Activated T-helper 1 cell treated with anti-CD3 and anti-CD28 coated beads, Interleukin-12 subunit alpha, Interleukin-12 subunit beta, Interleukin-2, Interleukin-4 antibody, amounts not matched to agents 30 ng/mL and 10 ng/mL and 1 ng/mL, durations not matched to agents 14 hours and 24 hours and 36 hours (primary cell): ENCODE measurements at regions of chr2 and their contacts with region 1.

Region 1: GRCh38 chr2:74458132-74458925 is at the start of gene WBP1:
- DNase-seq: peak; percentile 99
- H3K4me3 Mint-ChIP-seq: peak within 1 kb of the TSS; percentile 98
- H3K27ac Mint-ChIP-seq: peak within 1 kb of the TSS; percentile 98
- H3K4me1 Mint-ChIP-seq: peaks cover 61% of the 10 kb centered on the region
- H3K27me3 Mint-ChIP-seq: no peaks in the 10 kb centered on the region
- total RNA-seq, gene WBP1: 32.6 and 35.3 TPM in 2 replicates

Region 2: GRCh38 chr2:73293534-73294171 is 1164.7 kb before region 1 on chr2 and contains the start of gene EGR4:
- intact Hi-C with region 1: loop called (anchors 1 kb)
- DNase-seq: peak; percentile 91
- H3K4me3 Mint-ChIP-seq: peak within 1 kb of the TSS; percentile 75
- H3K27ac Mint-ChIP-seq: peak within 1 kb of the TSS; percentile 63
- H3K4me1 Mint-ChIP-seq: peaks cover 14% of the 10 kb centered on the region
- H3K27me3 Mint-ChIP-seq: peaks cover 72% of the 10 kb centered on the region
- total RNA-seq, gene EGR4: 1.9 TPM in 2 replicates

Region 3: DNA sequence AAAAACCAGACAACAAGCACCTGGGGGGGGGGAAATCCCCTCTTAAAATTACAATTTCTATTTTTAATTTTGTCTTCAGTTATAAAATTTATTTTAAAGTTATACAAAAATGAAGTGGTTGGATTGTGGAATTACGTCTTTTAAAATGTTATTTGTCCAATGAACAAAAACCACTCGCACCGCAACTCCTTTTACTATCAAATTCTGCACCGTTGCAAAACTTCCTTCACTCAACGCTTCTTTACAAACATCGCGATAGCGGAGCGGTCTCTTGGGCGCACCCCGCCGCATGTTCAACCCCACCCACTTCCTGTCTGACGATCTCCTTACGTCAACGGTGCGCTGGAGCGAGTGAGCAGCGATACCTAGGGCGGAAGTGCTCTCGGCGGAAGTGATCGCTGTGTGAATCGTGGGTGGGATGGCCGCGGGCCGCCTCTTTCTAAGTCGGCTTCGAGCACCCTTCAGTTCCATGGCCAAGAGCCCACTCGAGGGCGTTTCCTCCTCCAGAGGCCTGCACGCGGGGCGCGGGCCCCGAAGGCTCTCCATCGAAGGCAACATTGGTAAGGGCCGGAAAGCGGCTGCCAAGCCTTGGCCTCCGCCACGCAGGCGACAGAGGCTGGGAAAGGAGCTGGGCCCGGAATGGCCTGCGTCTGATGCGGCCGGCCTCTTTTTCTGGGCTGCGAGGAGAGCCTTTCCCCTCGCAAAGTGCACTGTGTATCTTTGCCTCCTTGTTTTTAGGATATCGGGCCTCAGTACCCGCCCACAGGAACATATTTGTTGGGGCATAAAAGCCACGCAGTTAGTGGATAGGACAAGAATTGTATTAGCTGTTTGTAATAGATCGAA is 531.6 kb before region 1 on chr2 and contains the start of gene DGUOK:
- intact Hi-C with region 1: loop called (anchors 10 kb)
- DNase-seq: peak; percentile 97
- H3K4me3 Mint-ChIP-seq: peak within 1 kb of the TSS; percentile 91
- H3K27ac Mint-ChIP-seq: peak within 1 kb of the TSS; percentile 88
- H3K4me1 Mint-ChIP-seq: peaks cover 56% of the 10 kb centered on the region
- H3K27me3 Mint-ChIP-seq: no peaks in the 10 kb centered on the region
- total RNA-seq, gene DGUOK: 92.8 and 98.0 TPM in 2 replicates

Region 4: GRCh38 chr2:74391580-74392448 is 66.5 kb before region 1 on chr2:
- intact Hi-C with region 1: loop called (anchors 1 kb)
- DNase-seq: peak; percentile 88
- H3K4me3 Mint-ChIP-seq: peak overlapping the region; percentile 43
- H3K27ac Mint-ChIP-seq: peak overlapping the region; percentile 98
- H3K4me1 Mint-ChIP-seq: no peaks in the 10 kb centered on the region
- H3K27me3 Mint-ChIP-seq: peaks cover 10% of the 10 kb centered on the region

Region 5: DNA sequence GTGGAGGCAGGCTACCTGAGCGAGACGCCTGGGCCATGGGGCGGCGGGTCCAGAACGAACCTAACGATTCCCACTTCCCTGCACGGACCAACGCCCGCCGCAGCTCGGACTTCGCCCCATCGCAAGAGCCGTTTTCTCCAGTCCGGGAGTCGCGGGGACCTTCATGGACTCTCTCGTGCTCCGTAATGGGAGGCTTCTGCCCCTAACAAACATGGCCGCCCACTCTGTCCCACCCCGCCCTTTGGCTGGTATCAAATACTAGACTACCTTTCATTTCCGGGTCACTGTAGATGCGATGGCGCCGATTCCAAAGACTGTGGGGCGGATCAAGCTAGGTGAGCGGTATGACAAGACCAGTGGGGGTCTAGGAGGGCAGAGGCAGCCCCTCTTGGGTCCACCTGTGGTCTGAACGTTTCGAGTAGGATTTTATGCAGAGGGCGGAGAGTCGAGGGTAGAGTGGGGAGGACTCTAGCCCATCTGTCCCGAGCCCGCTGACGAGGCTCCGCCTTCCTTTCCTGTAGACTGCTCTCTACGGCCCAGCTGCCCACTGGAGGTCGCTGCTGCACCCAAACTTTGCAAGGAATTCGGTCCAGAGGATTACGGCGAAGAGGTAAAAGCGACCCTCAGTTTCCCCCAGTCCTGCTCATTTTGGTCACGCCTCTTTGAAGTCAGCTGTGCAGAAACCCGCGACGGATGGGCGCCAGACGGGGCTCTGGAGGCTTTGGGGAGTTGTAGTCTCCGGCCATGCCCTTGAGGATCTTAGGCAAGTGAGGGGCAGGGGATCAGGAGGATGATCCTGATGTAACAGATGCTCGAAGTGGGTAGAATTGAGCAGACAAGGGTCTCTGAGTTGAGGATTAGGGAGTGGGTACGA is 24.7 kb after region 1 on chr2 and contains the starts of genes CCDC142 and TTC31:
- intact Hi-C with region 1: loop called (anchors 1 kb)
- DNase-seq: peak; percentile 89
- H3K4me3 Mint-ChIP-seq: peak within 1 kb of the TSS; percentile 99
- H3K27ac Mint-ChIP-seq: peak within 1 kb of the TSS; percentile 99
- H3K4me1 Mint-ChIP-seq: peaks cover 35% of the 10 kb centered on the region
- H3K27me3 Mint-ChIP-seq: no peaks in the 10 kb centered on the region
- total RNA-seq, gene CCDC142: 30.4 and 36.3 TPM in 2 replicates
- total RNA-seq, gene TTC31: 30.2 and 32.2 TPM in 2 replicates

Region 6: GRCh38 chr2:74553892-74554645 is 95.7 kb after region 1 on chr2 and contains the start of gene LOXL3:
- intact Hi-C with region 1: no loop called
- DNase-seq: peak; percentile 77
- H3K4me3 Mint-ChIP-seq: peak within 1 kb of the TSS; percentile 95
- H3K27ac Mint-ChIP-seq: peak within 1 kb of the TSS; percentile 96
- H3K4me1 Mint-ChIP-seq: peaks cover 33% of the 10 kb centered on the region
- H3K27me3 Mint-ChIP-seq: peaks cover 11% of the 10 kb centered on the region
- total RNA-seq, gene LOXL3: 1.9 and 2.0 TPM in 2 replicates

Region 7: DNA sequence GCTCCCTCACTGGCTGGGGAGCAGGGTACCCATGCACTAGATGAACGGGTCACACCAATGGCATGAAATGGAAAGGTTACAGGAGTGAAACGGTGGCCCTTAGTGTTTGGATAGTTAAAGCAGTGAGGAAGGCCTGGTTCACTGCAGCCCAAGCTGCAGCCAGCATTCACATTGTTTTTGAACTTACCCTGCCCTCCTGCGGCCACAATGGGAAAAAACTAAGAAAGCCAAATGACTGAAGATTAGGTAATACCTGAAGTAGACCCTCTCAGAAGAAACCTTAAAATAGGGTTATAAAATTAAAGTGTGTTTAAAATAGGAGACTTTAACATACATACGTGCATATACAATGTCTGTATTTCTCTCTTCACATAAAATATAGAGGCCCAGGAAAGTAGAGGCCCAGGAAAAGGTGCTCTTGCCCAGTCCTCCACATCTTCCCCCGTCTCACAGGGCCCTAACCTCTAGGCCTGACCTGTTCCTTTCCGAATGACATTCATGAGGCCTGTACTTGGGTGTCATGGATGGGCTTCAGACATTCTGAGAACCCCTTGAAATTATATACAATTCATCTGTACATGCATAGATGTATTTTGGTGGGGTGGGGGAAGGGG is 129.4 kb after region 1 on chr2:
- intact Hi-C with region 1: loop called (anchors 1 kb)
- DNase-seq: peak; percentile 56
- H3K4me3 Mint-ChIP-seq: no peak overlapping the region
- H3K27ac Mint-ChIP-seq: peak overlapping the region; percentile 12
- H3K4me1 Mint-ChIP-seq: peaks cover 37% of the 10 kb centered on the region
- H3K27me3 Mint-ChIP-seq: peaks cover 17% of the 10 kb centered on the region

Region 8: GRCh38 chr2:74639543-74639942 is 181.2 kb after region 1 on chr2:
- intact Hi-C with region 1: no loop called
- DNase-seq: no peak
- H3K4me3 Mint-ChIP-seq: no peak overlapping the region
- H3K27ac Mint-ChIP-seq: no peak overlapping the region
- H3K4me1 Mint-ChIP-seq: no peaks in the 10 kb centered on the region
- H3K27me3 Mint-ChIP-seq: peaks cover 23% of the 10 kb centered on the region